ENCODE measurements at regions of chr3 and their contacts with region 1.

Region 1: GRCh38 chr3:67018105-67018788 is 20.1 kb downstream of the KBTBD8 start:
- H3K4me3 ChIP-seq: no peak overlapping the region
- H3K27ac ChIP-seq: no peak overlapping the region
- H3K4me1 ChIP-seq: 0 out of 2 replicates have a peak, but pooled peaks cover 2% of the 10 kb centered on the region
- CTCF ChIP-seq: no peak

Region 2: GRCh38 chr3:66629150-66629981 is 388.9 kb before region 1 on chr3:
- CTCF ChIA-PET with region 1: no interaction called
- POLR2A ChIA-PET with region 1: no interaction called
- H3K4me3 ChIP-seq: no peak overlapping the region
- H3K27ac ChIP-seq: no peak overlapping the region
- H3K4me1 ChIP-seq: no peaks in the 10 kb centered on the region
- CTCF ChIP-seq: no peak

Region 3: DNA sequence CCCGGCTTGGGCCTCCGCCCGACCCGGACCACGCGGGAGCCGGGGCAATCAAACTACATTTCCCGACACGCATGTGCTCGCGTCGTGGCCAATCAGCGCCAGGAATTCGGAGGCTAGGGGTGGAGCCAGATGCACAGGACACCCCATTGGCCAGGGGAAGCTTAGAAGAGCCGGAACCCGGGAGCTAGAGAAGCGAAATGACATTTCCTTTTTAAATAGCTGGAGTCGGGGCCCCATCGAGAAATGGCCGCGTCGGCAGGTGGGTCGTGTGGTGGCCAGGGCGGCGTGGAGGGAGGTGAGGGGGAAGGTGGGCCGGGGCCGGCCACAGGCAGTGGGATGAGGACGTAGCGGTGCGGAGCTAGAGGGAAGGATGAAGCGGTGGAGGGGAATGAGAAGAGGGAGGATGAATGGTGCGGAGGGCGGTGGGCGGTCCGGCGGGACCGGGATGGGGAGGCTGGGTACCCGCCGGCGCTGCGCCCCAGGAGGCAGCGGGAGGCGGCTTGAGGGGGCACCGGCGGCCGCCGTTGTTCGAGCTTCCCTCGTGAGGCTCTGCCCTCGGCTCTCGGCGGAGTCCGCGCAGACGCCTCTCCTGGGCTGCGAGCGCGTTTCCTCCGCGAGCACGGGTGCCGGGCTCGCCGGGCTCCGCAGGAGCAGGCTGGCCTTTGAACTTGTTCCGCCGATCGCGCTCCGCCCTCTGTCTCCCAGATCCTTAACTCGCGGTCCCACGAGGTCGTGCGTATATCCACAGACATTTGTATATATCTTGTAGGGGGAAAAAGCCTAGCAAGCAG is 19.9 kb before region 1 on chr3 and contains the start of gene KBTBD8:
- CTCF ChIA-PET with region 1: no interaction called
- POLR2A ChIA-PET with region 1: interaction called, 11 read pairs
- H3K4me3 ChIP-seq: peak within 1 kb of the TSS; percentile 83
- H3K27ac ChIP-seq: no peak within 1 kb of the TSS; the same call in 1 of the 2 replicates
- H3K4me1 ChIP-seq: no peaks in the 10 kb centered on the region
- CTCF ChIP-seq: no peak